ENCODE measurements at regions of chr17 and their contacts with region 1.

Region 1: DNA sequence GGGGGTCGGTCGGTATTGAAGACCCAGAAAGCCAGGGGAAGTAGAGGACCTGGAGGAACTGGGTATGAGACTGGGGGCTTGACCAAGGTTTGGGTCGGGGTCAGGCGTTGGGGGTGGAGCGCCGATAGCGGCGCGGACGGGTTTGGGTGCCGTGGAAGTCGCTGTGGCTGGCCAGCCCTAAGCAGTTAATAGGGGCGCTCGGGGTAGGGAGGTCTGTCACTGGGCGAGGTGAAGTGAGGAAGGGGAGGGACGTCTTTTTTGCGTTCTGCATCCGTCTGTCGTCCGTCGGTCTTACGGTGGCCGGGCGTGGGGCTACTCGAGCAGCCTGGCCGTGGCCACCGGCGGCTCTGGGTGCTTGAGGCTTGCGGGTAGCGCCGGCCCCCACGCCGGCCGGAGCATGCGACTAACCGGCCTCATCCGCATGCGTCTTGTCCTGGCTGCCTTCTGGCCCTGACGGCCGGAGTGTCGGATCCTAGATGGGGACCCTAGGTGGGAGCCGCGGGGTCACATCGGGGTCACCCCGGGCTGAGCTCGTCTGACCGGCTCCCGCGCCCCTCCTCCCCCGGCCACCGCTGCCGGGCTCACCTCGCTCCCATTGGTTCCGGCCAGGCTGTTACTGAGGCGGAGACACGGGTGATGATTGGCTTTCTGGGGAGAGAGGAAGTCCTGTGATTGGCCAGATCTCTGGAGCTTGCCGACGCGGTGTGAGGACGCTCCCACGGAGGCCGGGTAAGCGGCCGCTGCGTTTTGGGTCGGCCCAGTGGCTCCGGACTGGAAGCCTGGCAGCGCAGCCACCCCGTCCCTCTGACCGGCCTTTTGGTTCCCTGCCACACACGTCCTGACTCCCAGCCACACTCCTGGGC is 10.3 kb upstream of the TMEM88 start:
- DNase-seq: peak; percentile 90
- H3K4me3 Mint-ChIP-seq: peak overlapping the region; percentile 89
- H3K27ac Mint-ChIP-seq: peak overlapping the region; percentile 99
- H3K4me1 Mint-ChIP-seq: peaks cover 46% of the 10 kb centered on the region
- H3K27me3 Mint-ChIP-seq: no peaks in the 10 kb centered on the region

Region 2: DNA sequence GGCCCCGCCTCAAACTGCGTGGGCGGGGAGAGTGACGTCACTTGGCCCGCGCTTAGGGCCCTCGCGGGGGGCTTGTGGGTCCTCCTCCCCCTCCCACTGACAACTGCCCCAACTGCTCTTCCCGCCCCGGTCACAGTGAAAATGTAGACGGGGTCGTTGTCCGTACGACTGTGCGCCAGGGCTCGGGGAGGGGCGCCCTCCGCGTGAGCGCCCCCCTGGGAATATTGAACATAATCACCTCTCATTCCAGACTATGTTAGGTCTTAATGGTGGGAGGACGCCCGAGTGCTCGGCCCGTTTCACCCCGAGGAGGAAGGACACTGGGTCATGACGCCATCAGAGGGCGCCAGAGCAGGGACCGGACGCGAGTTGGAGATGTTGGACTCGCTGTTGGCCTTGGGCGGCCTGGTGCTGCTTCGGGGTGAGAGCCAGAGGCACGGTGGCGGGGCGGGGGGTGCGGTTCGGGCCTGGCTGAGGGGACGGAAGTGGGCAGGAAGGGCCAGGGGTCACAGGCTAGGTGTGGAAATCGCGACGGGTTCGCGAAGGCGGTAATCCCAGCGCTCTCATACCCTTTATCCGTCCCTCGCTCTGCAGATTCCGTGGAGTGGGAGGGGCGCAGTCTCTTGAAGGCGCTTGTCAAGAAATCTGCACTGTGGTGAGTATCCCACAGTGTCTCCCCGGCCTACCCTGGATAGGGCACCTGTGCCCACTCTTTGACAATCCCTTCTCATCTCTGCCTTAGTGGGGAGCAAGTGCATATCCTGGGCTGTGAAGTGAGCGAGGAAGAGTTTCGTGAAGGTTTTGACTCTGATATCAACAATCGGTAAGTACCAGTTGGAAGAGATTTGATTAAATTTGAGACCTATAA is 592.1 kb before region 1 on chr17 and contains the start of gene ELP5:
- CTCF ChIA-PET with region 1: interaction called, 3 read pairs
- intact Hi-C with region 1: loop called (anchors 5 kb)
- DNase-seq: peak; percentile 93
- H3K4me3 Mint-ChIP-seq: peak within 1 kb of the TSS; percentile 86
- H3K27ac Mint-ChIP-seq: peak within 1 kb of the TSS; percentile 99
- H3K4me1 Mint-ChIP-seq: peaks cover 34% of the 10 kb centered on the region
- H3K27me3 Mint-ChIP-seq: no peaks in the 10 kb centered on the region
- total RNA-seq, gene ELP5: 52.4 to 53.5 TPM

Region 3: GRCh38 chr17:7572588-7573323 is 271.8 kb before region 1 on chr17:
- CTCF ChIA-PET with region 1: no interaction called
- intact Hi-C with region 1: loop called (anchors 2 kb)
- DNase-seq: peak; percentile 100
- H3K4me3 Mint-ChIP-seq: peak overlapping the region; percentile 85
- H3K27ac Mint-ChIP-seq: peak overlapping the region; percentile 99
- H3K4me1 Mint-ChIP-seq: peaks cover 55% of the 10 kb centered on the region
- H3K27me3 Mint-ChIP-seq: no peaks in the 10 kb centered on the region

Region 4: GRCh38 chr17:7782237-7782636 is 62.3 kb before region 1 on chr17:
- CTCF ChIA-PET with region 1: no interaction called
- intact Hi-C with region 1: no loop called
- DNase-seq: no peak
- H3K4me3 Mint-ChIP-seq: no peak overlapping the region
- H3K27ac Mint-ChIP-seq: no peak overlapping the region
- H3K4me1 Mint-ChIP-seq: no peaks in the 10 kb centered on the region
- H3K27me3 Mint-ChIP-seq: peaks cover 2% of the 10 kb centered on the region

Region 5: GRCh38 chr17:7856883-7857723 is 12.6 kb after region 1 on chr17 and contains the start of gene NAA38:
- CTCF ChIA-PET with region 1: interaction called, 6 read pairs
- intact Hi-C with region 1: loop called (anchors 1 kb)
- DNase-seq: peak; percentile 98
- H3K4me3 Mint-ChIP-seq: no peak within 1 kb of the TSS
- H3K27ac Mint-ChIP-seq: no peak within 1 kb of the TSS
- H3K4me1 Mint-ChIP-seq: peaks cover 22% of the 10 kb centered on the region
- H3K27me3 Mint-ChIP-seq: no peaks in the 10 kb centered on the region
- total RNA-seq, gene NAA38: 75.0 to 75.3 TPM

Region 6: GRCh38 chr17:8151123-8151640 is 306.7 kb after region 1 on chr17:
- CTCF ChIA-PET with region 1: no interaction called
- intact Hi-C with region 1: loop called (anchors 2 kb)
- DNase-seq: peak; percentile 86
- H3K4me3 Mint-ChIP-seq: peak overlapping the region; percentile 84
- H3K27ac Mint-ChIP-seq: peak overlapping the region; percentile 84
- H3K4me1 Mint-ChIP-seq: peaks cover 43% of the 10 kb centered on the region
- H3K27me3 Mint-ChIP-seq: no peaks in the 10 kb centered on the region

Region 7: DNA sequence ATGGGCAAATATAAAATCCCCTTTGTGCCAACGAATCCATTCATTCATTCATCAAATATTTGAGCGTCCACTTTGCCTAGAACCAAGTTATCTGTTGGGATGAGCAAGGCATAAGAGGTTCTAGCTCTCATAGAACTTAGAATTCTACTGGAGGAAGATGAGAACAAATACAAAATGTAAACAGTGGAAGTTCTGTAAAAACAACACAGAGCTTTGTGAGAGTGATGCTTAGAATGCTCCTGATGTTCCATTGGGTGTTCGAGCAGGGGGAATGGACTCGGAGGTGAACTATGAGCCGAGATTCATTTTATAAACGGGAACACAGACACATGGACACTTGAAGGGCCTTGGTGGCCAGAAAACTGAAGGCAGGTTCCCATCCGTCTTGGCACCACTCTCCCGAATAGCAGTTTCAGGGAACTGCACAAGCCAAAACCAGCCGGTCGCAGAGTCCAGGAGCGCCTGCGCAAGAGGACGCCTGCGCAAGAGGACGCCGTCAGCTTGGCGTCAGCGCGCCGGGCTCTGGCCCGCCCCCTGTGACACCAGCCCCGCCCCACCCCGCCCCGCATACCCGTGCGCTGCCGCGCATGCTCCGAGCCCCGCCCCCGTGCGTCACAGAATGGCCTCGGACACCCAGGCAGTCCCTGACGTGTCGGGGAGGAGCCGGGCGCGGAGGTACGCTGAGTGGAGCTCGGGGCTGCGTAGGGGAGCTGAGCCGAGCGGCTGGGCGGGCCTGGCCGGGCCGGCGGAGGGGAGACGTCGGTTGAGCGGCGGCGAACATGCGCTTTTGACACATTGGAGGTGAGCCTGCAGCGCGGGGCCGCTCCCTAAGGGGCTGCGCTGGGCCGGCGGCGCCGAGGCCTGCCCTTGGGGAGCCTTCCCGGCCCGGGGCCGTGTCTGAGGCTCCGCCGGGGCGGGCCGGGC is 591.0 kb after region 1 on chr17 and contains the start of gene NDEL1:
- CTCF ChIA-PET with region 1: no interaction called
- intact Hi-C with region 1: loop called (anchors 5 kb)
- DNase-seq: peak; percentile 99
- H3K4me3 Mint-ChIP-seq: peak within 1 kb of the TSS; percentile 96
- H3K27ac Mint-ChIP-seq: peak within 1 kb of the TSS; percentile 93
- H3K4me1 Mint-ChIP-seq: peaks cover 32% of the 10 kb centered on the region
- H3K27me3 Mint-ChIP-seq: no peaks in the 10 kb centered on the region
- total RNA-seq, gene NDEL1: 43.1 to 47.1 TPM

Measured in activated naive CD4-positive, alpha-beta T cell treated with anti-CD3 and anti-CD28 coated beads for 36 hours (primary cell).